Activated naive CD4-positive, alpha-beta T cell treated with anti-CD3 and anti-CD28 coated beads, Interleukin-2, amount 10 ng/mL, durations not matched to agents 7 days and 5 days (primary cell): ENCODE measurements at regions of chr6 and their contacts with region 1.

Region 1: DNA sequence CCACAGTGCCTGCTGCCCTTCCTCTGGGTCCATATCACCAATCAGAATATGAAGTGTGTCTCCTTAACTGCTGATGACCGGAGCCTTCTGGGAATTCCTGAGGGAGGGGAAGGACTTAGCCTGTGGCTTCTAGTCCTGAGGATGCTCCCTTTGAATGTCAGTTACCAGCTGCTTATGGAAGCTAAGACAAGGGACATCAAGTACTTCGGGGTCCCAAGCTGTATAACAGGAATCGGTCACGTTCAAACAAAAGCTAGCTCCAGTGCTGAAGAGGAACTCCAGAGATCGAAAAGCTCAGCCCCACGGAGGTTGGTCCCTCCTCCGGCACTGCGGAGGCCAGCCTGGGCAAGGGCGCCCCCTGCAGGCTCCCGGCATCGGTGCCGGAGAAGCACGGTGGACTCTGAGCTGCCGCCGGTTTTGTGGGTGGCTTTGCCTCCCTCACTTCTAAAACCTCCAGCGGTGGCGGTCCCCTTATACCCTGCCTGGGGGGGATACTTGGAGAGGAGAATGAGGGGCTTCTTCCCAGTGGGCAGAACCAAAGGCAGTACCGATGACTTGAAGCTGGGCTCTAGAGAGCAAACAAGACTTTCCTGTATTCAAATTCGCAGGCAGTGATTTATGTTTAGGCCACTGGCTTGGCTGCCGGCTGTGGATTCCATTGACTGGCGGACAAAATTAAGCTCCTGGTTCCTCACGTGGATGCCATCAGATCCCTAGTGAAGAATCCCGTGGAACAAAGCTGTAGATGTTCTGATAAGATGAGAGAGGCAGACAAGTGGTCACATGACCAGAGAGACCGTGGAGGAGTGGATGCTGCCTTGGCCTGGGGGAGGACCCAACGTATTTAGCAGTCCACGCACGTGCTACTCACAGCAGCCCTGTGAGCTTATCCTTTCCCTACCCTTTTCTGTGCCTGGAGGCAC is 16.2 kb upstream of the UBR2 start:
- DNase-seq: peak; percentile 89
- H3K4me3 Mint-ChIP-seq: peak overlapping the region; percentile 51
- H3K27ac Mint-ChIP-seq: peak overlapping the region; percentile 42
- H3K4me1 Mint-ChIP-seq: peaks cover 15% of the 10 kb centered on the region
- H3K27me3 Mint-ChIP-seq: peaks cover 8% of the 10 kb centered on the region

Region 2: GRCh38 chr6:42217519-42218367 is 329.9 kb before region 1 on chr6 and contains the start of gene MRPS10:
- CTCF ChIA-PET with region 1: interaction called, 48 read pairs
- DNase-seq: peak; percentile 95
- H3K4me3 Mint-ChIP-seq: peak within 1 kb of the TSS; percentile 99
- H3K27ac Mint-ChIP-seq: peak within 1 kb of the TSS; percentile 95
- H3K4me1 Mint-ChIP-seq: peaks cover 28% of the 10 kb centered on the region
- H3K27me3 Mint-ChIP-seq: no peaks in the 10 kb centered on the region

Region 3: DNA sequence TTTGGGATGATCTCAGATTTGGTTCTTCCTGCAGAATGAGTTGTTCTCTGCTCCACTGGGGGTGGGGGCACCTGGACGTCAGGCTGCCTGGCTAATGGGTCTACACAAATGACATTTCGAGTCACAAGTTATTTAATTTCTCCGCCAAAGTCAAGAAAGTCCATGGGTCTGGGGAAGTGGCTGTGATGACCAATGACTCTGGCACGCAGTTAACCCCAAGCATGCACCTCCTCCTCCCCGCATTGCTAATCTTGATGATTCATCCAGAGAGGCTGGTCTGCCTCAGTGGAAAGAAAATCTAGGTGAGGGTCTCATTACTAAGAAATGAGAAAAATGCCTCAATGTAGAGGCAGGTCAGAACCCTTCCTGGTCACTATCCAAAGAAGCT is 231.7 kb before region 1 on chr6:
- CTCF ChIA-PET with region 1: interaction called, 20 read pairs
- DNase-seq: no peak
- H3K4me3 Mint-ChIP-seq: no peak overlapping the region
- H3K27ac Mint-ChIP-seq: no peak overlapping the region
- H3K4me1 Mint-ChIP-seq: peaks cover 9% of the 10 kb centered on the region
- H3K27me3 Mint-ChIP-seq: no peaks in the 10 kb centered on the region

Region 4: GRCh38 chr6:42511803-42512422 is 35.8 kb before region 1 on chr6:
- CTCF ChIA-PET with region 1: interaction called, 10 read pairs
- DNase-seq: no peak
- H3K4me3 Mint-ChIP-seq: no peak overlapping the region
- H3K27ac Mint-ChIP-seq: no peak overlapping the region
- H3K4me1 Mint-ChIP-seq: no peaks in the 10 kb centered on the region
- H3K27me3 Mint-ChIP-seq: no peaks in the 10 kb centered on the region

Region 5: GRCh38 chr6:42563697-42564505 is 16.2 kb after region 1 on chr6 and contains the start of gene UBR2:
- CTCF ChIA-PET with region 1: interaction called, 26 read pairs
- DNase-seq: peak; percentile 97
- H3K4me3 Mint-ChIP-seq: peak within 1 kb of the TSS; percentile 94
- H3K27ac Mint-ChIP-seq: peak within 1 kb of the TSS; percentile 95
- H3K4me1 Mint-ChIP-seq: peaks cover 35% of the 10 kb centered on the region
- H3K27me3 Mint-ChIP-seq: peaks cover 18% of the 10 kb centered on the region

Region 6: GRCh38 chr6:42704241-42704936 is 156.7 kb after region 1 on chr6:
- CTCF ChIA-PET with region 1: no interaction called
- DNase-seq: no peak
- H3K4me3 Mint-ChIP-seq: no peak overlapping the region
- H3K27ac Mint-ChIP-seq: peak overlapping the region; percentile 58
- H3K4me1 Mint-ChIP-seq: no peaks in the 10 kb centered on the region
- H3K27me3 Mint-ChIP-seq: peaks cover 4% of the 10 kb centered on the region

Region 7: GRCh38 chr6:43035495-43036194 is 488.0 kb after region 1 on chr6:
- CTCF ChIA-PET with region 1: no interaction called
- DNase-seq: no peak
- H3K4me3 Mint-ChIP-seq: no peak overlapping the region
- H3K27ac Mint-ChIP-seq: no peak overlapping the region
- H3K4me1 Mint-ChIP-seq: no peaks in the 10 kb centered on the region
- H3K27me3 Mint-ChIP-seq: no peaks in the 10 kb centered on the region